AG04450 (cell line): ENCODE measurements at regions of chr11 and their contacts with region 1.

Region 1: DNA sequence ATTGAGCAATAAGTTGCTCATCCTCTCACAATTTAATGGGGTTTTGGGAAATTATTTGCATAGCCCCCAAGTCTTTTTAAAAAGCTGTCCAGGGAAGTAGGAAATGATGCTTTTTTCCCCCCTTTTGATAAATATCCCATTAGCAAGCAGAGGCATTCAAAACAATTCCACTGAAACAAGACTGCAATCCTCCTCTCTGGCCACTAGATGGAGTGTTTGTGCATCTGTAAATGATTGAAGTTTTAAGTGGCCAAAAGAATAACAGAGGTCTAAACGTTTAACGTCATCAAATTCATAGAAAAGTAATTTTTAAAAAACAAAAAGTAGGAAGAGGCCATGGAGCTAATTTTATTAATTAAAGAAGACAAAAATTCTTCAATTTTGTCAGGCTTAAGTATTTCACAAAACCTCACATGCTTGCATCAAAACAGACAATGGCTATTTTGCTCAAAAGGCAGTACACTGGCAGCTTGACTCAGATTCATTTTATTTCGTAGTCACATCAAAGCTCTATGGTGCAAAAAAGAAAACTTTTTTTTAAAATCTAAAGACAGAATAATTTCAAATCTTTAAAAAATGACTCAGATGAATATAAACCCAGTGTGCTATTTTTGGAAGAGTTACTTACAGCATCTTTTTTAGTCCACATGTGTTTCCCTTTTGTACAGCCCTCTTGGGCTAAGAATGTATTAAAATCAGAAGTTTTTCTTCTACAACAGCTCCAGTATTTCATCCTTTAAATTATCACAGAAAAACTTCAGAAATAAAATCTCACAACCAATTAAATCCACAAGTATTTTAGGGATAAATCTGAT is 17.8 kb downstream of the CHORDC1 start:
- DNase-seq: peak; percentile 23
- H3K4me3 ChIP-seq: no peak overlapping the region
- H3K27ac ChIP-seq: no peak overlapping the region
- H3K27me3 ChIP-seq: no peaks in the 10 kb centered on the region
- CTCF ChIP-seq: peak; percentile 95

Region 2: DNA sequence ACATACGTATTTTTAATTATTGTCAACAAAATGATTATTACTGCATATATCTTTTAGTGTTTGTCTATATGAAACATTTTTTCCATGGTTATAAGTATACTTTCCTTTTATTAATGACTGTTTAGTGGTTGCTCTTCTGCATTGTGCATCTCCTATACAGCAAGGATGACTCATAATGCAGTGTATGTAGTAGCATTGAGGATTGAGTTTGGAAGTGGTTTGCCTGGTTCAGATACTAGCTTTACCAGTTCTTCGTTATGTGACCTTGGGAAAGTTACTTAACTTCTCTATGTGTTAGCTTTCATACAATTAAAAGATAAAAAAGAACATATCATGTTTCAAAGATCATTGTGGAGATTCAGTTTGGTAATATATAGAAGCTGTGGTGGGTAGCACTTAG is 26.3 kb before region 1 on chr11:
- CTCF ChIA-PET with region 1: interaction called, 12 read pairs
- POLR2A ChIA-PET with region 1: no interaction called
- DNase-seq: no peak
- H3K4me3 ChIP-seq: no peak overlapping the region
- H3K27ac ChIP-seq: no peak overlapping the region
- H3K27me3 ChIP-seq: no peaks in the 10 kb centered on the region
- CTCF ChIP-seq: no peak

Region 3: DNA sequence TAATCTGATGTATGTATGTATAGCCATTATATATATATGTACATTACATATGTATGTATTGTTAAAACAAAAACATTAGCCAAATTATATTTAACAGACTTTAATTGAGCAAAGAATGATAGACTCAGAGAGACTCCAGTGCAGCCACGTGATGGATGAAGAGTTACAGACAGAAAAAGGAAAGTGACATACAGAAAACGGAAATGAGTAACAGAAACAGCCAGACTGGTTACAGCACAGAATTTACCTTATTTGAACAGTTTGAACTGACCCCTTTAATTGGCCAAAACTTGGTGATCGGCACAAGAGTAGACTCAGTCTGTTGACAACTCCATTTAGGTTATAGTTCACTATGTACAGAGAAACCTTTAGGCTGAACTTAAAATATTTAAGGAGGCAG is 17.2 kb before region 1 on chr11:
- CTCF ChIA-PET with region 1: interaction called, 32 read pairs
- POLR2A ChIA-PET with region 1: no interaction called
- DNase-seq: no peak
- H3K4me3 ChIP-seq: no peak overlapping the region
- H3K27ac ChIP-seq: no peak overlapping the region
- H3K27me3 ChIP-seq: no peaks in the 10 kb centered on the region
- CTCF ChIP-seq: no peak

Region 4: DNA sequence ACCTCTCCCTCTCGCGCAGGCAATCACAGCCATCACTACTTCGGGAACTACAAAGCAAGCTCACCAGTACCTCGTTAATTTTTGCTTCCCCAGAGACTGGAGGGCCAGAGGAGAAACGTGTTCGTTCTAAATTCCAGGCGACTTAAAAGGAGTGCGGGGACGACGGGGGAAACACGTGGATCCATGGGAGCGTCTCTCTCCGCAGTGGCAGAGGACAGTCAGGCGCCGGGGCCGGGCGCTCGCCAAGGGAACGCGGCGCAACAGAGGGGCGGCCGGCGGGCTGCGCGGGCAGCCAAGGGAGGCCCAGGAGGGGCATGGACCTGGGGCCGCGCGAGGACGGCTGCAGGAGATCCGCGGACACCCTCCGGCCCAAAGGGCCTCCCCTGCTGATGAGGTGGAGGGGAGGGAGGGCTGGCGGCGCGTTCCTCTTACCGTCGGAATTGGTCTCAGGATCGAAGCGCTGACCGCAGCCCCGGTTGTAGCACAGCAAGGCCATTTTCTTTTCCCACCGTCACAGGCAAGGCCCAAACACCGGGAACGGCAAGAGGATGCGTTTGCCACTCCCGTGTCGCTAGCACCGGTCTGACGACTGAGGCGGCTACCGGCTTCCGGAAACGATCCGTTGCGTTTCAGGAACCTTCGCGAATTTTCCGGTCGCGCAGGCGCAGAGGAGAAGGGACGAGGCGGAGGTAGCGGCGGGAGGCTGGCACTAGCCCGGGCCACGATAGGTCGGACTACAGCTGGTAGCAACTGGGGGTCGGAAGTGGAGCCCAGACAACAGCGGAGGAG is 17.6 kb after region 1 on chr11 and contains the start of gene CHORDC1:
- CTCF ChIA-PET with region 1: interaction called, 29 read pairs
- POLR2A ChIA-PET with region 1: no interaction called
- DNase-seq: peak; percentile 51
- H3K4me3 ChIP-seq: peak within 1 kb of the TSS; percentile 84
- H3K27ac ChIP-seq: peak within 1 kb of the TSS; percentile 73
- H3K27me3 ChIP-seq: no peaks in the 10 kb centered on the region
- CTCF ChIP-seq: no peak
- polyA plus RNA-seq, gene CHORDC1: 26.2 and 34.3 TPM in 2 replicates

Region 5: DNA sequence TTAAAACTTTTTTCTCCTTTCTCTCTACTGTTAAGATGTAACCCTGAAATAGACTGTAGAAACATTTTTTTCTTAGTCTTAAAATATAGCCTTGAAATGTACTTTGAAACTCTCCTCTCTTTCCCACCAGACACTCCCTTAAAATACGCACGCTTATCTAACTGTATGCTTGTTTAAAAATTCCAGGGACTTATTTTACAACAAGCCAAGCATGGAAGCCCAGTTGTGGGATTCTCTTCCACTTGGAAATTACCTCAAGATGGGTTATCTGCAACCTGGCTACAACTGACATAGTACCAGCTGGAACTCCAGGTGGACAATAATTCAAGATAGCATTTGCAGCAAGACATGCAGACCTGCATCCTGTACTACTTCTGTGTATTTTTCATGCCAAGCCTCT is 29.9 kb after region 1 on chr11:
- CTCF ChIA-PET with region 1: interaction called, 18 read pairs
- POLR2A ChIA-PET with region 1: no interaction called
- DNase-seq: no peak
- H3K4me3 ChIP-seq: no peak overlapping the region
- H3K27ac ChIP-seq: no peak overlapping the region
- H3K27me3 ChIP-seq: no peaks in the 10 kb centered on the region
- CTCF ChIP-seq: no peak